ENCODE measurements at regions of chr2 and their contacts with region 1.

Region 1: GRCh38 chr2:157596992-157597681 is 31.5 kb downstream of the ACVR1C start:
- DNase-seq: peak; percentile 51
- ATAC-seq: peak; percentile 56

Region 2: GRCh38 chr2:157302492-157303099 is 294.5 kb before region 1 on chr2:
- intact Hi-C with region 1: loop called (anchors 10 kb)
- DNase-seq: no peak
- ATAC-seq: peak; percentile 83

Measured in Right ventricle myocardium superior (tissue), 1 donor.